Body of pancreas (tissue), 4 donors: ENCODE measurements at regions of chr12 and their contacts with region 1.

Region 1: GRCh38 chr12:100404769-100405407 is 48.0 kb downstream of the SLC17A8 start:
- DNase-seq: peak; percentile 62 to 73 (median 66)
- ATAC-seq: peak; percentile 64
- H3K4me3 ChIP-seq: no peak overlapping the region
- H3K27ac ChIP-seq: no peak overlapping the region
- H3K4me1 ChIP-seq: no peaks in the 10 kb centered on the region
- H3K27me3 ChIP-seq: no peaks in the 10 kb centered on the region
- CTCF ChIP-seq: peak in 6 of 7 experiments; percentile 40 to 63 (median 56)
- POLR2A ChIP-seq: no peak

Region 2: DNA sequence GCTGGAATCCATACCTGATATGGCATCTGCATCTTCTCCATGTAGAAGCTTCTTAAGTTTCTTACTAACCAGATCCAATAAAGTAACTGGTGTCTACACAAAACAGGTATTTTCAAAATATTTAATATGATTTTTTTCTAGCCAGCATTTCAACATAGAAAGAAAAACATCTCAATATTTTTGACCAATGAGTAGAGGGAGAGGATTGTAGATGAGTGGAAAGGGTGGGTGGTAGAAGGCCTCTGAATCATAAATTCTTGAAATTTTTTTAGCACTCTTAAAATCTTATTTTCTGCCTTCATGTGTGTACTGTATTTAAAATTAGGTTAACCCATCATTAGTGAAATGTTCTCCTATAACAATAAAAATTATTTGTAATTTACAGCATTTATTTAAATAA is 156.0 kb before region 1 on chr12:
- intact Hi-C with region 1: loop called (anchors 10 kb)
- DNase-seq: no peak
- ATAC-seq: no peak
- H3K4me3 ChIP-seq: no peak overlapping the region
- H3K27ac ChIP-seq: no peak overlapping the region
- H3K4me1 ChIP-seq: peaks cover 15% of the 10 kb centered on the region
- H3K27me3 ChIP-seq: no peaks in the 10 kb centered on the region
- CTCF ChIP-seq: no peak
- POLR2A ChIP-seq: no peak